Gastrocnemius medialis (tissue), 4 donors: ENCODE measurements at regions of chr6 and their contacts with region 1.

Region 1: GRCh38 chr6:148342357-148343046 is at the start of gene SASH1:
- DNase-seq: peak; percentile 35 to 43
- ATAC-seq: peak; percentile 88 to 91
- H3K4me3 ChIP-seq: peak within 1 kb of the TSS; percentile 65 to 67 (median 66)
- H3K27ac ChIP-seq: peak within 1 kb of the TSS; percentile 79 to 84 (median 82)
- H3K4me1 ChIP-seq: peaks cover 4 to 7% of the 10 kb centered on the region in 2 donors
- H3K27me3 ChIP-seq: peaks cover 0 to 6% (median 0%) of the 10 kb centered on the region in 3 donors
- CTCF ChIP-seq: no peak
- POLR2A ChIP-seq: peak; percentile 44 to 67
- total RNA-seq, gene SASH1: 28.2 to 42.4 (median 35.4) TPM

Region 2: GRCh38 chr6:148064406-148065134 is 277.9 kb before region 1 on chr6:
- in situ Hi-C with region 1: no loop called
- intact Hi-C with region 1: no loop called
- DNase-seq: no peak
- ATAC-seq: no peak
- H3K4me3 ChIP-seq: no peak overlapping the region
- H3K27ac ChIP-seq: no peak overlapping the region
- H3K4me1 ChIP-seq: no peaks in the 10 kb centered on the region
- H3K27me3 ChIP-seq: no peaks in the 10 kb centered on the region
- CTCF ChIP-seq: no peak
- POLR2A ChIP-seq: no peak

Region 3: GRCh38 chr6:148223424-148223842 is 119.1 kb before region 1 on chr6:
- in situ Hi-C with region 1: no loop called
- intact Hi-C with region 1: no loop called
- DNase-seq: no peak
- ATAC-seq: no peak
- H3K4me3 ChIP-seq: no peak overlapping the region
- H3K27ac ChIP-seq: no peak overlapping the region
- H3K4me1 ChIP-seq: no peaks in the 10 kb centered on the region
- H3K27me3 ChIP-seq: no peaks in the 10 kb centered on the region
- CTCF ChIP-seq: no peak
- POLR2A ChIP-seq: no peak

Region 4: GRCh38 chr6:148324297-148324985 is 18.1 kb before region 1 on chr6:
- in situ Hi-C with region 1: no loop called
- intact Hi-C with region 1: no loop called
- DNase-seq: no peak
- ATAC-seq: no peak
- H3K4me3 ChIP-seq: no peak overlapping the region
- H3K27ac ChIP-seq: no peak overlapping the region
- H3K4me1 ChIP-seq: no peaks in the 10 kb centered on the region
- H3K27me3 ChIP-seq: no peaks in the 10 kb centered on the region
- CTCF ChIP-seq: no peak
- POLR2A ChIP-seq: no peak

Region 5: DNA sequence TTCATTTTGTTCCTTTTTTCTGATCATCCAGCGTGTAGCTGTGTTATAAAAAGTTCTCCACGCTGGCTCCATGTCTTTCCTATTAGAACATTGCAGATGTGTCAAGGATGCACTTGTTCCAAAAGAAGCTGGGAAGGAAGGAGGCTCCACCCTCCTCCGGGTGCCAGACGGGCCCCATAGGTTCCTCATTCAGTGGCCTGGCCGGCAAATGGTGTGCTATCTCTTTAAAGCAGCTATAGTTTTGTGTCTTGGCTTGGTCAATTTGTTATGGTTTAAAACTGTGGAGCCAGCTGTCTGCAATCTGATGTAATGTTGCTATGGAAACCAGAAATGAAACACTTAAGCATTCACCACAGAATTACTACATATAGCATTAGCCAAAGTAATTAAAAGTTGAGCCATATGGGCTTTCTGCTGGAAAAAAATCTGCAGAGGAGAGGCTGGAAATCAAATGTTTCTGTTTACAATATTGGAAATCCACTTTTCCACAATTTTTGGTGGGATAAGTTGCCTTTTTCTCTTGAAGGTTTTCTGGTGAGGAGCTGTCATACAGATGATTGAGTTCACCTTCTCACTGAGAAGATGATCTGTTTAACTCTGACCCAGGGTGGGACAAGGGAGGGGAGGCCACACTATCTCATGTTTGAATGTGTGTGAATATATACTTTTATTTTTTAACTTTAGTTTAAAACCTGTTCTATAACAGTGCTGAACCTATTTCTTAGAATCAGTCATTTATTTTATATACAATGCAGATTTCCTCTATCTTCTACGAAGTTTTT is 167.5 kb after region 1 on chr6:
- in situ Hi-C with region 1: no loop called
- intact Hi-C with region 1: loop called (anchors 5 kb)
- DNase-seq: peak; percentile 54 to 77
- ATAC-seq: peak; percentile 21 to 55
- H3K4me3 ChIP-seq: peak overlapping the region; percentile 53 to 59 (median 54)
- H3K27ac ChIP-seq: peak overlapping the region; percentile 79 to 84 (median 82)
- H3K4me1 ChIP-seq: peaks cover 11 to 26% of the 10 kb centered on the region in 2 donors
- H3K27me3 ChIP-seq: peaks cover 0 to 3% (median 0%) of the 10 kb centered on the region in 3 donors
- CTCF ChIP-seq: no peak
- POLR2A ChIP-seq: peak; percentile 44 to 61